GM10248 (cell line): ENCODE measurements at regions of chr13 and their contacts with region 1.

Region 1: GRCh38 chr13:25114220-25114619 is 18.3 kb downstream of the PABPC3 start:
- DNase-seq: peak; percentile 79
- CTCF ChIP-seq: peak; percentile 96

Region 2: DNA sequence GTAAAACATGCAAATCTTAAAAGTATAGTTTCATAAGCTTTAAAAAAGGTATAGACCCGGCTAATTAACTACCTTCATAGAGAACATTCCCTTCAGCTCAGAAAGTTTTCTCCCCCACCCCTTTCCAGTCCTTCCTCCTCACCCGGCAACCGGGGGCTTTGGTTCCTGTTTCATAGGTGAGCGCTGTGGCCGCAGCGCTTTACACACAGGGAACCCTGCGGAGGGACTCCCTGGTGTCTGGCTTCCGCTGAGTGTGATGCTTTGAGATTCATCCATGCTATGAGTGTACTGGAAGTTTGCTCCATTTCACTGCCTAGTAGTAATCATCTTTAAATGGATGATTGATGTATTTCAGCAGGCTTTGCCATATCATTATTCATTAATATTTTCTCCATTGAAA is 44.3 kb before region 1 on chr13:
- CTCF ChIA-PET with region 1: interaction called, 19 read pairs
- POLR2A ChIA-PET with region 1: no interaction called
- DNase-seq: no peak
- CTCF ChIP-seq: no peak

Region 3: GRCh38 chr13:25095862-25096453 is 18.3 kb before region 1 on chr13 and contains the start of gene PABPC3:
- CTCF ChIA-PET with region 1: interaction called, 24 read pairs
- POLR2A ChIA-PET with region 1: no interaction called
- DNase-seq: no peak
- CTCF ChIP-seq: no peak

Region 4: GRCh38 chr13:25149711-25150110 is 35.5 kb after region 1 on chr13:
- CTCF ChIA-PET with region 1: interaction called, 10 read pairs
- POLR2A ChIA-PET with region 1: no interaction called
- DNase-seq: no peak
- CTCF ChIP-seq: no peak